ENCODE measurements at regions of chr9 and their contacts with region 1.

Region 1: GRCh38 chr9:136686794-136687711 is at the start of gene AGPAT2:
- DNase-seq: peak; percentile 85 to 88
- ATAC-seq: peak; percentile 50 to 83 (median 66)
- H3K4me3 ChIP-seq: peak within 1 kb of the TSS; percentile 63 to 94 (median 82)
- H3K27ac ChIP-seq: peak within 1 kb of the TSS; percentile 74 to 96 (median 93)
- H3K4me1 ChIP-seq: peaks cover 25 to 96% (median 57%) of the 10 kb centered on the region in 9 donors
- H3K27me3 ChIP-seq: no peaks in the 10 kb centered on the region
- CTCF ChIP-seq: peak in 3 of 9 donors; percentile 6 to 15 (median 15)
- total RNA-seq, gene AGPAT2: 48.1 to 83.3 (median 58.4) TPM

Region 2: GRCh38 chr9:136564379-136564988 is 122.6 kb before region 1 on chr9:
- intact Hi-C with region 1: no loop called
- DNase-seq: peak; percentile 69 to 73
- ATAC-seq: peak; percentile 40 to 73 (median 58)
- H3K4me3 ChIP-seq: peak overlapping the region in 5 of 10 donors; percentile 1 to 23 (median 5)
- H3K27ac ChIP-seq: peak overlapping the region; percentile 47 to 92 (median 84)
- H3K4me1 ChIP-seq: peaks cover 46 to 73% (median 70%) of the 10 kb centered on the region in 9 donors
- H3K27me3 ChIP-seq: no peaks in the 10 kb centered on the region
- CTCF ChIP-seq: peak in 5 of 9 donors; percentile 9 to 43 (median 28)

Region 3: DNA sequence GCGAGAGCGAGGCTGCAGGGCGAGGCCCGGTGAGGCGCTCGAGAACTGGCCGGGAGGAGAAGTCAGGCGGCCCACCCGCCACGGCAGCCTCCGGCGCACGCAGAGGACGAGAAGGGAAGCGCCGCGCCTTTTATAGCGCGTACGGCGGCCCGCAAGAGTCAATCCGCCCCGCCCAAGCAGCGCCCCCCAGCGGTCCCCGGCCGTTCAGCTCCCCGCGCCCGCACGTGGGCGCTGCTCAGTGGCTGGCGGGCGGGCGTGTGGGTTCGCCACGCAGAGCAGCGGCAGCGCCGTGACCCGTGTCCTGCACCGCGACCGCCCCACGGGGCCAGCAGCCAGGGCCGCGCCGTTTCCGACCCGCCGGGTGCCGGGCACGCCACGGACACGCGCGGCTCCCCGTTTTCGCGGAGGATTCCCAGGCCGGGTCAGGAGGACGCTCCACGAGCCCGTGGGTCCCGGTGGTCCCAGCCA is 41.1 kb after region 1 on chr9:
- intact Hi-C with region 1: loop called in 3 of 10 experiments (anchors 1 to 5 kb)
- DNase-seq: peak; percentile 92 to 94
- ATAC-seq: peak; percentile 68 to 92 (median 79)
- H3K4me3 ChIP-seq: peak overlapping the region; percentile 63 to 98 (median 82)
- H3K27ac ChIP-seq: peak overlapping the region; percentile 25 to 92 (median 85)
- H3K4me1 ChIP-seq: peaks cover 16 to 54% (median 47%) of the 10 kb centered on the region in 9 donors
- H3K27me3 ChIP-seq: no peaks in the 10 kb centered on the region
- CTCF ChIP-seq: peak; percentile 81 to 98 (median 94)